MCF 10A (cell line): ENCODE measurements at regions of chr4 and their contacts with region 1.

Region 1: DNA sequence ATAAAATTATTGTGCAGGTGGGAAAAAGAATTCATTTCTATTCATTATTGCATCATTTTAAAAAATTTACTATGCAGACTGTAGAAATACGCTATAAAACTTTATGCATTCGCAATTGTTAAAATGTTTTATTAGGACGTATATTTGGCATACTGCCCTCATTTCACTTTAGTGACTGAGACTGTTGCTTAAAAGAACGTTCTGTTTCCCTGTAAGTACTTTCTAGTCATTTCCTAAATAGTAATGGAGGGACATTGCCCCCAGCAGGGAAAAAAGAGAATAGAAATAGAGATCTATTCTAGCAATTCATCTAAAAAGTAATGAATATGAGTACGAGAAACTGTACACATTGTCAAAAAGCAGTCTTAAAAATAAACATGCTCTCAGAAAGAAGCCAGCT is 1295.8 kb upstream of the TENM3 start:
- DNase-seq: peak; percentile 59
- H3K4me3 Mint-ChIP-seq: no peak overlapping the region
- H3K27ac Mint-ChIP-seq: no peak overlapping the region
- H3K4me1 Mint-ChIP-seq: peaks cover 11% of the 10 kb centered on the region
- H3K27me3 Mint-ChIP-seq: no peaks in the 10 kb centered on the region
- CTCF ChIP-seq: peak; percentile 45

Region 2: DNA sequence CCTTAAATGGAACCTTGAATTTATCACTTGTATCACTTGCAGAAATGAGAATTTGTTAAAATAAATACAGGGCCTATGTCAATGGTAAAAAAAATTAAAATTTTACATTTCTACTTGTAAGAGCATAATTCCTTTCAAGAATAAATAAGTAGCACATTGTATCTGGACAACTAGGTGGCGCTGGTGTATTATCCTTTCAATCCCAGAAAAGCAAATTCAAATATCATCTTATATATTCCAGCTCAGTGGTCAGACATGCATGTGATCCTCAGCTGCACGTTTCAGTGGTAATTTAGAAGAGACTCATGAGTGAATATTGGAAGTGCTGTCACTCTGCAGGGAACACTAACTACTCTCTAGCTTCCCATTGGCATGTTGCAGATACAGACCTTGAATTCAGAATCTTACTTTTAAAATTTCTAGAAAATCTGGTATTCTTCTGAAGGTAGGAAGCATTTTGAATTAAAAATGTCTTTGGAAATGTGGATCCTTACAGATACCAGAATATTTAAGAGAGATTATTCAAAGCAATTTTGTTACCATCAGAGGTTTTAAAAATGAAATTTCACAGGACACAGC is 118.9 kb before region 1 on chr4:
- CTCF ChIA-PET with region 1: interaction called, 19 read pairs
- POLR2A ChIA-PET with region 1: no interaction called
- intact Hi-C with region 1: loop called (anchors 1 kb)
- DNase-seq: peak; percentile 71
- H3K4me3 Mint-ChIP-seq: no peak overlapping the region
- H3K27ac Mint-ChIP-seq: no peak overlapping the region
- H3K4me1 Mint-ChIP-seq: peaks cover 11% of the 10 kb centered on the region
- H3K27me3 Mint-ChIP-seq: no peaks in the 10 kb centered on the region
- CTCF ChIP-seq: peak; percentile 63

Region 3: GRCh38 chr4:180909279-180909678 is 38.1 kb before region 1 on chr4:
- CTCF ChIA-PET with region 1: no interaction called
- POLR2A ChIA-PET with region 1: no interaction called
- intact Hi-C with region 1: loop called (anchors 1 kb)
- DNase-seq: peak; percentile 48
- H3K4me3 Mint-ChIP-seq: no peak overlapping the region
- H3K27ac Mint-ChIP-seq: no peak overlapping the region
- H3K4me1 Mint-ChIP-seq: no peaks in the 10 kb centered on the region
- H3K27me3 Mint-ChIP-seq: no peaks in the 10 kb centered on the region
- CTCF ChIP-seq: peak; percentile 39

Region 4: GRCh38 chr4:181289198-181289597 is 341.8 kb after region 1 on chr4:
- CTCF ChIA-PET with region 1: no interaction called
- POLR2A ChIA-PET with region 1: no interaction called
- intact Hi-C with region 1: no loop called
- DNase-seq: no peak
- H3K4me3 Mint-ChIP-seq: no peak overlapping the region
- H3K27ac Mint-ChIP-seq: no peak overlapping the region
- H3K4me1 Mint-ChIP-seq: no peaks in the 10 kb centered on the region
- H3K27me3 Mint-ChIP-seq: no peaks in the 10 kb centered on the region
- CTCF ChIP-seq: no peak

Region 5: DNA sequence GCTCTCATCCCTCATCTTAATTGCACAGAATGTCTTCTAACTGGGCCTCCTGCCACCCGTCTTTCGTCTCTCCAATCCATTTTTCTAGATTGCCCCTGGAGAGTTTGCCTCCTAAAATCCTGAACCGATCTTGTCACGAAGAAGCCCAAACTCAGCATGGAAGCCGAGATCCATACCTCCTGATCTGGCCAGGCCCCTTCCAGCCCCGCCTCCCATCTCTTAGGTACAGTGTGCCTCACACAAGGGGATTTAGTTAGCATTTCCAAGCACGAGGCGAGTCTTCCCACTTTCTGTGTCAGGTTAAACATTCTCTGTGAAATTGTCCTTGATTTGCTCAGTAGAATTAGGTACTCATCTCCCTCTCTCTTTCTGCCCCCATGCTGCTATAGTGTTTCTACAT is 1215.8 kb after region 1 on chr4:
- CTCF ChIA-PET with region 1: no interaction called
- POLR2A ChIA-PET with region 1: no interaction called
- intact Hi-C with region 1: no loop called
- DNase-seq: no peak
- H3K4me3 Mint-ChIP-seq: no peak overlapping the region
- H3K27ac Mint-ChIP-seq: no peak overlapping the region
- H3K4me1 Mint-ChIP-seq: no peaks in the 10 kb centered on the region
- H3K27me3 Mint-ChIP-seq: no peaks in the 10 kb centered on the region
- CTCF ChIP-seq: no peak